Gastrocnemius medialis (tissue), 4 donors: ENCODE measurements at regions of chr10 and their contacts with region 1.

Region 1: GRCh38 chr10:11017570-11018431 is at the start of gene CELF2:
- DNase-seq: peak; percentile 74 to 82
- ATAC-seq: peak; percentile 81 to 85
- H3K4me3 ChIP-seq: peak within 1 kb of the TSS; percentile 63 to 81 (median 76)
- H3K27ac ChIP-seq: peak within 1 kb of the TSS; percentile 86 to 95 (median 92)
- H3K4me1 ChIP-seq: peaks cover 19 to 40% of the 10 kb centered on the region in 2 donors
- H3K27me3 ChIP-seq: peaks cover 0 to 12% (median 0%) of the 10 kb centered on the region in 3 donors
- CTCF ChIP-seq: peak in 1 of 5 experiments; percentile 16
- POLR2A ChIP-seq: peak; percentile 76 to 87
- total RNA-seq, gene CELF2: 30.0 to 56.6 (median 43.3) TPM

Region 2: DNA sequence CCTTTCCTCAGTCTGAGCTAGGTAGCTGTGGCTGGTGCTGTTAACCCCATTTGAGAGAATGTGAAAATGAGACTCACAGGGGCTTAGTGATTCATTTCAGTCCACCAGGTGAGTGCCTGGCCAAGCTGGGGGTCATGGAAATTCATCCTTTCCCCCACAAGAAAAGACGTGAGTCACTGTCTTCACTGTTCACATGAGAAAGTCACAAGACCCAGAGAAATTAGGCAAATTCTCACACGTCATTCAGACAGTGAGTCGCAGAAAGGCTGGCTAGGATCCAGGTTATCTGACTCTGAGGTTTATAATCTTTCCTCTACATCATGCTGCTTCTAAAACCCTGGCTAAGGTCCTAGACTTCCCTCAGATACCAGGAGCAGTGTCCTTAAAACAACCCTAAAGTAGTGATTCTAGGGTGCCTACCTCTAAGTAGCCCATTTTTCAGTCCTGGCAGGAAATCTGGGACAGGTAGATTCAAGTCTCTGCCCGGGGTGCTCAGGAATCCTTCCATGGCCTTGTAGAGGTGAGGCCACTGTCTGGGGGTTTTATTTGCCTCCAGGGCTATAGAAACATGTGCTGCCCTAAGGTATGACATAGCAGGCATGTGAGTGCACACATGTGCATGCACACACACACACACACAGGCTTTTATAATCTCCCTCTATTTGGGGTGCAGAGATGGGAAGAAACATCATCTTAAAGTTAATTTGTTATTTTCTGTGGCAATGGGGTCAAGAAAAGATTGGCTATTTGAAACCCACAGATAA is 428.1 kb before region 1 on chr10:
- in situ Hi-C with region 1: no loop called
- intact Hi-C with region 1: loop called (anchors 5 kb)
- DNase-seq: peak; percentile 21 to 45
- ATAC-seq: peak; percentile 37 to 57
- H3K4me3 ChIP-seq: no peak overlapping the region
- H3K27ac ChIP-seq: peak overlapping the region in 3 of 4 donors; percentile 23 to 51 (median 37)
- H3K4me1 ChIP-seq: peaks cover 13 to 36% of the 10 kb centered on the region in 2 donors
- H3K27me3 ChIP-seq: no peaks in the 10 kb centered on the region
- CTCF ChIP-seq: no peak
- POLR2A ChIP-seq: no peak

Region 3: DNA sequence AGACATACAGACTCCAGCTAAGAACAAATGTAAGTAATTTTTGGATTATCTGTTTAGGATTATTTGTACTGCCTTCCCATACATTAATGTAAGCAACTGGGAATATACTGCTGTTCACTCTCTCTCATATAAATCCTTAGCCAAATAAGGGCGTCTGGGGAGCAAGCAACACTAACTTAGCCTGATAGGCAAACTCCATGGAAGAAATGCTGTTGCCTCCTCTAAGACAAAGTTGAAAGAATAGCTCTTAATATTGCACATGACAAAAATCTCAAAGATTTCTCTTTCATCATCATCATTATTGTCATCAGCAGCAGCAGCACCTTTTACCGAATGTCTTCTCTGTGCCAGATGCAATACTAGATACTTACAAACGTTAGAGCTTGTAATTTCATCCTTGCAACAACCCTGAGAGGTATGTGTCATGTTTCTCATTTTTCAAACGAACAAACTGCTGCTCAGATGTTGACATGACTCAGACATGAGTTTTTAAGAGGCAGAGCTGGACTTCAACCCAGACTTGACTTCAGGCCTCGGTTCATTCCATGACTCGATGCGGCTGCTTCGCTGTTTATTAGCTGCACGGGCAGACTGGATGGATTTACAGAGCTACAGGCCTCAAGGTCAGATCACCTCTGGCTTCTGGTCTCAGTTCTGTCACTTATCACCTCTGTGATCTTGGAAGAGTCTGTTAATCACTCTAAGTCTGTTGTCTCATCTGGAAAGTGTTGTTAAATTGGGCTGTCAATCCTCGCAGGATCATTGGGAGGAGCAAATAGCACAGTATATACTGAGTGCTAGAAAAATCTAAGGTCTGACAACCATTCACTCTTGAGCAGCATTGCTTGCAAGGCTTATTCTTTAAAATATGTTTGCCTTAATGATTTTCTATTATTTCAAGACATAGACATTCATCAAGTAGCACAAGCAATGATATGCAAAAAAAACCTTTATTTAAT is 126.4 kb before region 1 on chr10:
- in situ Hi-C with region 1: no loop called
- intact Hi-C with region 1: loop called (anchors 5 kb)
- DNase-seq: peak; percentile 57 to 59
- ATAC-seq: peak; percentile 98 to 99
- H3K4me3 ChIP-seq: no peak overlapping the region
- H3K27ac ChIP-seq: peak overlapping the region; percentile 40 to 71 (median 70)
- H3K4me1 ChIP-seq: peaks cover 12 to 15% of the 10 kb centered on the region in 2 donors
- H3K27me3 ChIP-seq: no peaks in the 10 kb centered on the region
- CTCF ChIP-seq: no peak
- POLR2A ChIP-seq: peak in 1 of 2 donors; percentile 24

Region 4: GRCh38 chr10:11036407-11037011 is 18.7 kb after region 1 on chr10:
- in situ Hi-C with region 1: no loop called
- intact Hi-C with region 1: loop called (anchors 1 kb)
- DNase-seq: no peak
- ATAC-seq: peak; percentile 46 to 60
- H3K4me3 ChIP-seq: no peak overlapping the region
- H3K27ac ChIP-seq: no peak overlapping the region
- H3K4me1 ChIP-seq: peaks cover 14 to 18% of the 10 kb centered on the region in 2 donors
- H3K27me3 ChIP-seq: no peaks in the 10 kb centered on the region
- CTCF ChIP-seq: peak; percentile 16 to 63 (median 53)
- POLR2A ChIP-seq: no peak

Region 5: GRCh38 chr10:11742005-11742778 is 724.4 kb after region 1 on chr10 and contains the start of gene ECHDC3:
- in situ Hi-C with region 1: no loop called
- intact Hi-C with region 1: loop called (anchors 10 kb)
- DNase-seq: peak; percentile 71 to 72
- ATAC-seq: peak; percentile 61 to 65
- H3K4me3 ChIP-seq: peak within 1 kb of the TSS; percentile 72 to 86 (median 78)
- H3K27ac ChIP-seq: peak within 1 kb of the TSS; percentile 93 to 96 (median 94)
- H3K4me1 ChIP-seq: peaks cover 28 to 34% of the 10 kb centered on the region in 2 donors
- H3K27me3 ChIP-seq: no peaks in the 10 kb centered on the region
- CTCF ChIP-seq: no peak
- POLR2A ChIP-seq: peak; percentile 83 to 86
- total RNA-seq, gene ECHDC3: 465 to 605 (median 490) TPM